Activated B cell treated with CpG ODN at 0.5 μM for 24 hours (primary cell): ENCODE measurements at regions of chr12 and their contacts with region 1.

Region 1: DNA sequence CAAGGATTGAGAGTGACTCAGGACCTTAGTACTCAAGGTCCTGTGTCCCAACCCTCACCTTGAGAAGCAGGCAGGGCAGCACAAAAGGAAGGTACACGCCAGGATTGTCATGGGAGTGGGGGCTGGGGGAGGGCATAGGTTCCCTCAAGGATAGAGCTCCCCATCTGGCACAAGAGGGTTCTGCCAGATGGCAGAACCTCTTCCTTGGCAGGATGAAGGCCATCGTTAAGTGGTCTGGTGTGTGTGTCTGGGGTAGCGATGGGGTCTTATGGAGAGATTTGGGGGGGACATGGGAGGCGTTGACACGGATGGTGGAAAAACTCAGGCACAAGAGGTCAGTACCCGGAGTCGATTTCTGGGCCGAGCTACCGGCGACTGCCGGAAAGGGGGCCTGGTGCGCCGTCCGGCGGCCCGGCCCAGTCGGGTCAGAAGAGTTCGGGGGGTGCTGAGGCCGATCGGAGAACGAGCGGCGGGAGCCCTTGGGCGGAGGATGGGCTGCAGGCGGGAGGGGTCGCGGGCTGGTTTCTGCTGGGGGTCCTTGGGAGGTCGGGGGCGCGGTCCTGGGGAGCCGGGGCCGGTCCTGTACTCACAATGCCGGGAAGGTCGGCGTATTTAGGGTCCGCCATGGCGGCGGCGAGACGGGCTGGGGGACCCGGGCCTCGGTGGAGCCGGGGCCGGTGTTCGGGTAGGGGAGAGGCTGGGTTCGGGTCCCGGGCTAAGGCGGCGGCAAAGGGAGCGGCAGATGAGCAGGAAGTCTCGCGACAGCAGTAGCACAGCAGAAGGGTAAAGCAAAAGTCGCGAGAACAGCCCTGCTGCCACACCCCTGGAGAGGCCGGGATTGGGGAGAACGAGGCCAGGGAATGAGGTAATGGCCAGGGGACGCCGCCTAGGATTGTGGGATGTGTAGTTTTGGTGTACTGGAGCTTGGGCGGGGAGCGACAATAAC is at the start of gene DCTN2:
- DNase-seq: peak; percentile 81
- ATAC-seq: peak; percentile 97
- H3K4me3 Mint-ChIP-seq: peak within 1 kb of the TSS; percentile 99
- H3K27ac Mint-ChIP-seq: peak within 1 kb of the TSS; percentile 84
- H3K4me1 Mint-ChIP-seq: peaks cover 36% of the 10 kb centered on the region
- H3K27me3 Mint-ChIP-seq: peaks cover 10% of the 10 kb centered on the region
- CTCF ChIP-seq: no peak
- total RNA-seq, gene DCTN2: 83.3 and 91.8 TPM in 2 replicates

Region 2: GRCh38 chr12:57476162-57476992 is 70.3 kb before region 1 on chr12:
- CTCF ChIA-PET with region 1: no interaction called
- POLR2A ChIA-PET with region 1: interaction called, 14 read pairs
- intact Hi-C with region 1: no loop called
- DNase-seq: peak; percentile 54
- ATAC-seq: peak; percentile 38
- H3K4me3 Mint-ChIP-seq: peak overlapping the region; percentile 93
- H3K27ac Mint-ChIP-seq: peak overlapping the region; percentile 100
- H3K4me1 Mint-ChIP-seq: peaks cover 80% of the 10 kb centered on the region
- H3K27me3 Mint-ChIP-seq: no peaks in the 10 kb centered on the region
- CTCF ChIP-seq: no peak

Region 3: GRCh38 chr12:57487597-57488401 is 58.9 kb before region 1 on chr12 and contains the start of gene MARS1:
- CTCF ChIA-PET with region 1: no interaction called
- POLR2A ChIA-PET with region 1: no interaction called
- intact Hi-C with region 1: loop called (anchors 1 kb)
- DNase-seq: peak; percentile 83
- ATAC-seq: peak; percentile 97
- H3K4me3 Mint-ChIP-seq: peak within 1 kb of the TSS; percentile 97
- H3K27ac Mint-ChIP-seq: peak within 1 kb of the TSS; percentile 97
- H3K4me1 Mint-ChIP-seq: peaks cover 41% of the 10 kb centered on the region
- H3K27me3 Mint-ChIP-seq: no peaks in the 10 kb centered on the region
- CTCF ChIP-seq: no peak
- total RNA-seq, gene MARS1: 368 and 425 TPM in 2 replicates

Region 4: DNA sequence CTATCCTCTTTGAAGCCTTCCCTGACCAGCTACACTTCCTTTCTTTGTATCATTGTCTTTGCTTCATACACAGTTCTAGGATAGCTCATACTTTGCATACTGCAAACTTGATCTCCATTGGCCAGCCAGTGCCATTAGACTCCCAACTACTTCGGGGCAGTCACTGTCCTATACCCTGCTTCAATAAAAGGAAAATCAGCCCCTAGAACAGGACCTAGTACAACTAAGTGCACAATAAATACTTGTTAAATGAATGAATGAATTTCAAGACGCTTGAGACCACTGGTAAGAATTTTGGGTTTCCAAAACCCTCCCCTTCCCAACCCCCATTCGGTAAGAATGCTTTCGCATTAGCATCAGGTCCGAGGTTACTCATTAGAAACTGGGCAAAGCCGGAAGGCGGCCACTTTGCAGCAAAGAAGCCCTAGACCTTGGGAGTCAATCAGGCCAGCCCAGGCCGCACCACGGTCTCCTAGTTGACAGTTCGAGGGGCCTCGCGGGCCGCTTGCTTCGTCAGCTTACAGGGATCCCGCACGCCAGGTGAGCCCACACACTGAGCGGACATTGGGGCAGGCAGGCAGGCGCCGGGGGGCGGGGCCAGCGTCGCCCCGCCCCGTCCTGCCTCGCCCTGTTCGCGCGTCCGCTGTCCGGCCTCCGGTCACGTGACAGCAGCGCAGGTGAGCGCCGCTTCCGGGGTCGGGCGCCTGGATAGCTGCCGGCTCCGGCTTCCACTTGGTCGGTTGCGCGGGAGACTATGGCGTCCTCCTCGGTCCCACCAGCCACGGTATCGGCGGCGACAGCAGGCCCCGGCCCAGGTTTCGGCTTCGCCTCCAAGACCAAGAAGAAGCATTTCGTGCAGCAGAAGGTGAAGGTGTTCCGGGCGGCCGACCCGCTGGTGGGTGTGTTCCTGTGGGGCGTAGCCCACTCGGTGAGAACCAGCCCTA is 44.1 kb after region 1 on chr12 and contains the start of gene PIP4K2C:
- CTCF ChIA-PET with region 1: no interaction called
- POLR2A ChIA-PET with region 1: interaction called, 11 read pairs
- intact Hi-C with region 1: no loop called
- DNase-seq: peak; percentile 79
- ATAC-seq: peak; percentile 96
- H3K4me3 Mint-ChIP-seq: peak within 1 kb of the TSS; percentile 88
- H3K27ac Mint-ChIP-seq: peak within 1 kb of the TSS; percentile 68
- H3K4me1 Mint-ChIP-seq: peaks cover 19% of the 10 kb centered on the region
- H3K27me3 Mint-ChIP-seq: no peaks in the 10 kb centered on the region
- CTCF ChIP-seq: no peak
- total RNA-seq, gene PIP4K2C: 16.5 and 17.9 TPM in 2 replicates